Calu3 (cell line): ENCODE measurements at regions of chr12 and their contacts with region 1.

Region 1: DNA sequence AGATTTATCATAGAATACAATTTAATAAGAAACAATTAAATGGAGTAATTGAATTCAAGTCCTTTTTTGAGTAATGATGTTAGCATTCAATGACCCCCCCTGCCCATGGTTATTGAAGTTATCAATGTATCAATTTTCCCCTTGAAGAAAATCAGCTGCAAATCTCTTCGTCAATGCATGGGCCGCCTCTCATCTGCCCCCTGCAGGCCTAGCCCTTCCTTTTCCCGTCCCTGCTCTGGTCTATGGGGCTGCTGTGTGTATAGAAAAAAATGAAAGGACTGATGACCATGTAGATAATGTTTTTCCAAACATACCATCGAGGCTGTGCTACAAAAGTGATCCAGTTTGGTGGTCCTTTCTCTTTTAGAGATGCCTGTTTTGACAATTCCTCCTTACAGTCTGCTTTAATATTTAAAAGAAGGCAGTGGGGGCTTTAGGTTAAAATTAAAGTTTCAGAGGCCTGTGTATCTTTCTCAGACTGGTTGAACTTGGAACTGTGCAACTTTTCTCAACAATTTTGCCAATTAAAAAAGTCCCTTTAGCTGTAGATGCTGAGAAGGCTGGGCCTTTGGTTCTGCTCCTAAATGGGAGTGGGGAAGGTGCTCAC is 98.4 kb downstream of the APAF1 start:
- DNase-seq: peak; percentile 64
- H3K4me3 Mint-ChIP-seq: no peak overlapping the region
- H3K27ac Mint-ChIP-seq: no peak overlapping the region
- H3K4me1 Mint-ChIP-seq: no peaks in the 10 kb centered on the region
- H3K27me3 Mint-ChIP-seq: peaks cover 63% of the 10 kb centered on the region
- CTCF ChIP-seq: peak; percentile 48

Region 2: DNA sequence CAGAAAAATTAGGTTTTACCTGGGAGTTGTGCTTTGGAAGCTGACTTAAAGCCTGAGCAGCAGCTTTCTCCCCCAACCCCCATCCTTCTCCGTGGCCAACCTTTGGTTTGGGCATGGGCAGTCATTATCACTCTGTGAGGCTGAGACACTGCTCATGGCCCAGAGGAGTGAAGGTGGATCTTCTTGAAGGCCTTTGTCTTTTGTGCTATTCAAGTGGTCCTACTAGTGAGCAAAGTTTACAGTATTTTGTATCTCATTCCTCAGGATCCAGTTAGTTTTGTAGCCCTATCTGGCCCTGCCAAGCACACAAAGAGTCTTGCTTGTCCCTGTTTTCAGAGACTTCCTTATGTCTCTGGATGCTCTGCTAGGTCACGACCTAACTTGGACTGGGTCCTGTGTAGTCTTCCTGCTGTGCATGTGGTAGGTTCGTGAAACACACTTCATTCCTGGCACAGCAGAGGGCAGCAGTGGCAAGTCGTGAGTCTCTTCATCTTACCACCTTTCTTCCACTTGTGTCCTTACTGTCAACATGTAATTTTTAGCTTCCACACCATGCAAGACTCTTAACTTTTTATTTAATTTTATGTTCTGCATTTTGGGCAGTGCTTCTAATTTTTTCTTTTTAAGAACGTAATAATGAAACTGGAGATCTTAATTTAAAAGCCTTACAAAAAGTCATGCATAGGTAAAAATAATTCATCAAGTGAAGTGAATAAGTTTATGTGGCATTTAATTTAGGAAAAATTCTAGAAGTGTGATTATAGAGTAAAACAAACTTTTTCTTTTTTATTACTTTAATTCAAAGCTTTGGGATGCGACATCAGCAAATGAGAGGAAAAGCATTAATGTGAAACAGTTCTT is 44.6 kb before region 1 on chr12:
- CTCF ChIA-PET with region 1: interaction called, 13 read pairs
- intact Hi-C with region 1: no loop called
- DNase-seq: peak; percentile 49
- H3K4me3 Mint-ChIP-seq: no peak overlapping the region
- H3K27ac Mint-ChIP-seq: no peak overlapping the region
- H3K4me1 Mint-ChIP-seq: no peaks in the 10 kb centered on the region
- H3K27me3 Mint-ChIP-seq: no peaks in the 10 kb centered on the region
- CTCF ChIP-seq: peak; percentile 59

Region 3: DNA sequence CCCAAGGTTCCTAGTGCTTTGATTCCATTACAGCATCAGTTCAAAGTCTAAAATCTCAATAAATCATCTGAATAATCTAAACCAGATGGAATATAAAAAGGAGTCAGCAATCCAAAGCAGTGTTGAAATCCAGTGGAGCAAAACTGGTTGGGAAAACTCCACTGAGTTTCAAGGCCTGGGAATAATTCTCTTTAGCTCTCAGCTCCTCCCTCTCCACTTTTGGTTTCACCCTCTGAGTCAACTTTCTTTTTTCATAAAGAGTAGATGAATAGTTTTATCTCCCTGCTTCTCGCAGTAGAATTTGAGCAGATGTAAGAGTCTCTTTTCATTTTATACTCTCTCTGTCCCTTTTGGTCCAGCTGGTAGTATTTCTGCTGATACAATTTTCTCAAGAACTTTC is 240.2 kb after region 1 on chr12:
- CTCF ChIA-PET with region 1: no interaction called
- intact Hi-C with region 1: no loop called
- DNase-seq: no peak
- H3K4me3 Mint-ChIP-seq: no peak overlapping the region
- H3K27ac Mint-ChIP-seq: no peak overlapping the region
- H3K4me1 Mint-ChIP-seq: no peaks in the 10 kb centered on the region
- H3K27me3 Mint-ChIP-seq: peaks cover 6% of the 10 kb centered on the region
- CTCF ChIP-seq: no peak